Posterior vena cava (tissue), 2 donors: ENCODE measurements at regions of chrX and their contacts with region 1.

Region 1: DNA sequence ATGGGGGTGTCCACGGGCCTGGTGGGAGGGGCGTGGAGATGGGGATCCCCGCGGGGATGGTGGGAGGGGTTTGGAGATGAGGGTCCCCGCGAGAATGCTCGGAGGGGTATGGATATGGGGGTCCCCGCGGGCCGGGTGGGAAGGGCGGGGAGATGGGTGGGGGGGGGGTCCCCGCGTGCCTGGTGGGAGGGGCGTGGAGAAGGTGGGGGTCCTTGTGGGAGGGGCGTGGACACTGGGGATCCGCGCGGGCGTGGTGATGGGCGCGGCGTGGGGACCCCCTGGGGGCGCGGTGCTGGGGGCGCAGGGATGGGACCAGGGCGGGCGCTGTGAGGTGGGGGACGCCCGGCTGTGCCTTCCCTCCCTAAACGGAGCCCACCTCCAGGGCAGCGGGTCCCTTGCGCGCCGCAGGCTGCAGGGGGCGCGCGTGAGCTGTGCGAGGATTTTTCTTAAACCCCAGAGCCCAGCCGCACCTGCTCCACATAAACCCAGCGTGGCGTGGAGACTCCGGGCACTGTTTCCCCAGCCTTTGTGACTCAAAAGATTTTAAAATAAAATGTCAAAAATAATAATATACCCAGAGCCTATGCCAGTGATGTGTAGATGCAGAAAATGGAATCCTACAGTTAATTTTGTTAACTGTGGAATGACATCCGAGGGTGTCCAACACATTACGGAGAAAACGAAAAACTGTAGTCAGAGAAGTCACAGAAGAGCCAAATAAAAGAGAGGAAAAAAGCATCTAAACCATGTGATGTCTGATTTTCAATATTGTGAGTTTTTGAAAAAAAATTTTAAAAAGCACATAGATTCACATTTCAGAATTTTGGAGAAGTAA is 1.5 kb upstream of the ASMTL start:
- DNase-seq: peak; percentile 95

Region 2: DNA sequence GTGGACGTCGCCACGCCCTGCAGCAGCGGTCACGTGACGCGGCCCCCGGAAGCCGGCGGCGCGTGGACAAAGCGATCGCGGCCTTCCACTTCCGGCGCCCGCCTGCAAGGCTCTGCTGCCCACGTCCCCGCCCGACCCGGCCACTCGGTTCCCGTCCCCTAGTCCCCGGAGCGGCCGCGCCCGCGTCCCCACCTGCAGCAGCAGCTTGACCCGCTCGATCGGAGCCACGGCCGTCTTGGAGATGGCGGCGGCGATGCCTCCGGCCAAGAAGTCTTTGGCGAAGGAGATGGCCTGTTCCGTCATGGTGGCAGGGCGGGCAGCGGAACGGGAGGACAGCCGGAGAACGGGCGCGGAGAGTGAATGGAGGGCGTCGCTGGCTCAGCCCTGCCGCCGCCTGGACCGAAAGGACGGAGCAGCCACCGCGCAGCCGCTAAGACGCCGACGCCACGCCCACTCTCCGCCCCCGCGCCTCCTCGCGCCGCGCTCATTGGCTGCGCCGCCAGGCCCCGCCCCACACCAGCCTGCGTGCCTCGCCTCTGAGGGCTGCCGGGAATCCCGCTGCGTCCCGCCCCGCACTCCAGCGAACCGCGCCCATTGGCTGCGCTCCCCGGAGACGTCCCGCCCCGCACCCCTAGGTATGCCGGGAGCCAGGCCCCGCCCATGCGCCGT is 62.3 kb before region 1 on chrX and contains the start of gene SLC25A6:
- intact Hi-C with region 1: loop called in 1 of 2 experiments (anchors 5 kb)
- DNase-seq: peak; percentile 100
- total RNA-seq, gene SLC25A6: 204 to 218 TPM

Region 3: DNA sequence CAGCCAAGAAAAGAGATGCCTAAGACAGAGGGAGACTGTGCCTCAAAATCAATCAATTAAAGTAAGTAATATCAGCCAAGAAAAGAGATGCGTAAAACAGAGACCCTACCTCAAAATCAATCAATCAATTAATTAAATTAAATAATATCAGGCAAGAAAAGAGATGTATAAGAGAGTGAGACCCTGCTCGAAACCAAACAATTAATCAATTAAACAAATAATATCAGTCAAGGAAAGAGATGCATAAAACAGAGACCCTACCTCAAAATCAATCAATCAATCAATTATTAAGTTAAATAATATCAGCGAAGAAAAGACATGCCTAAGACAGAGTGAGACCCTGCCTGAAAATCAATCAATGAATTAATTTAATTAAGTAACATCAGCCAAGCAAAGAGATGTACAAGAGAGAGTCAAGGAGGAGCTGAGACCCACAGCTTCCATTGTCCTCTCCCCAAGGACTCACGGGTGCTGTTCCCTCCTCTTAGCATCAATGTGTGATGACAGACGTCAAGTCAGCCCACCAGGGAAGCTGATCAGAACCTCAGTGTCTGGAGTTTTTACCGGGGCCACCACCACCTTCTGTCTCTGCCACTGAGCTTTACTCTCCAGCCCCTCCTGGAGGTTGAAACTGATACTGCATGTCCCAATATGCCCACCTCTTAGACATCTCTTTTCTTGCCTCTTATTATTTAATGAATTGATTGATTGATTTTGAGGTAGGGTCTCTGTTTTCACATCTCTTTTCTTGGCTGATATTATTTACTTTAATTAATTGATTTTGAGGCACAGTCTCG is 126.8 kb after region 1 on chrX:
- intact Hi-C with region 1: loop called in 1 of 2 experiments (anchors 5 kb)
- DNase-seq: peak; percentile 18

Region 4: GRCh38 chrX:1591102-1591900 is 137.1 kb after region 1 on chrX and contains the start of gene AKAP17A:
- intact Hi-C with region 1: loop called in 1 of 2 experiments (anchors 10 kb)
- DNase-seq: peak; percentile 98
- total RNA-seq, gene AKAP17A: 20.8 to 23.0 TPM